ENCODE measurements at regions of chr5 and their contacts with region 1.

Region 1: DNA sequence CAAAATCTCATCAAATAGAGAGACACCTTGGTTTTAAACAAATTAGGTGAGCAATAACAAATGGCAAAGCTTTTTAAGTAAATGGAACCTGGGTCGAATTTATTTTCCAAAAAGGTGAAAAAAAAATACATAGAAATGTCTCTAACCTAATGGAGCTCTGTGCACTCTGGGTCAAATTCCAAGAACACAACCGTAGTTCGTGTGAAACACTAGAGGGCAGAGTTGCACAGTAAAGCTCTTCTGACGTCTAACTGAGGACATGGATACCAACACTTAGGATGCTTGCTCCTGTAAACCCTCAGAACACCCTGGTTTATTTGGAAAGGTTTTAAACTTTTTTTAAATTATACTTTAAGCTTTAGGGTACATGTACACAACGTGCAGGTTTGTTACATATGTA is 18.9 kb downstream of the MARCHF11 start:
- DNase-seq: no peak
- H3K4me3 ChIP-seq: no peak overlapping the region
- H3K27ac ChIP-seq: no peak overlapping the region
- H3K4me1 ChIP-seq: no peaks in the 10 kb centered on the region
- H3K27me3 ChIP-seq: no peaks in the 10 kb centered on the region
- CTCF ChIP-seq: peak in 2 of 3 experiments; percentile 74 to 76; a peak in 3 of 4 replicates
- EP300 ChIP-seq: no peak
- POLR2A ChIP-seq: no peak
- RAD21 ChIP-seq: peak; percentile 92 to 95

Region 2: GRCh38 chr5:15885156-15885555 is 275.6 kb before region 1 on chr5:
- CTCF ChIA-PET with region 1: no interaction called
- POLR2A ChIA-PET with region 1: no interaction called
- DNase-seq: no peak
- H3K4me3 ChIP-seq: no peak overlapping the region
- H3K27ac ChIP-seq: no peak overlapping the region
- H3K4me1 ChIP-seq: peaks cover 0 to 2% (median 0%) of the 10 kb centered on the region in 4 experiments; a peak in 1 of 7 replicates
- H3K27me3 ChIP-seq: no peaks in the 10 kb centered on the region
- CTCF ChIP-seq: no peak
- EP300 ChIP-seq: no peak
- POLR2A ChIP-seq: no peak
- RAD21 ChIP-seq: no peak

Region 3: DNA sequence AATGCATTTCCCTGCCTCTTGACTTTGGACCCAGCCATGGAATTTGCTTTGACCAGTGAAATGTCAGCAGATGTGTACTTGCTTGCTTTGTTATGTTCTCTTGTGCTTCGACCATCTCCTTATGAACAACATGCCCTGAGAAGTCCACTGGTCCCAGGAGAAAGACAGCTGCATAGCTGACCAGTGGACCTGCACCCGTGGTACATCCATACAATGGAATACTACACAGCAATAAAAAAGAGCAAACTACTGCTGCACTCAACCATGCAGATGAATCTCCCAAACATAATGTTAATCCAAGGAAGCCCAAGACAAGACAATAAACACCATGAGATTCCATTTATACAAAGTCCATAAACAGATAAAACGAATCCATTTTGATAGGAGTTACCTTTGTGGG is 11.1 kb before region 1 on chr5:
- CTCF ChIA-PET with region 1: interaction called, 23 read pairs
- POLR2A ChIA-PET with region 1: interaction called, 4 read pairs
- DNase-seq: no peak
- H3K4me3 ChIP-seq: no peak overlapping the region
- H3K27ac ChIP-seq: no peak overlapping the region
- H3K4me1 ChIP-seq: no peaks in the 10 kb centered on the region
- H3K27me3 ChIP-seq: no peaks in the 10 kb centered on the region
- CTCF ChIP-seq: no peak
- EP300 ChIP-seq: no peak
- POLR2A ChIP-seq: no peak
- RAD21 ChIP-seq: no peak

Measured in H1 (cell line).